Right lobe of liver (tissue), 6 donors: ENCODE measurements at regions of chr4 and their contacts with region 1.

Region 1: GRCh38 chr4:150242820-150243458 is 164.7 kb downstream of the DCLK2 start:
- DNase-seq: no peak
- ATAC-seq: peak; percentile 76 to 83 (median 80)
- H3K4me3 ChIP-seq: no peak overlapping the region
- H3K27ac ChIP-seq: no peak overlapping the region
- H3K4me1 ChIP-seq: no peaks in the 10 kb centered on the region
- H3K27me3 ChIP-seq: no peaks in the 10 kb centered on the region
- CTCF ChIP-seq: peak; percentile 72 to 85 (median 84)
- POLR2A ChIP-seq: no peak

Region 2: DNA sequence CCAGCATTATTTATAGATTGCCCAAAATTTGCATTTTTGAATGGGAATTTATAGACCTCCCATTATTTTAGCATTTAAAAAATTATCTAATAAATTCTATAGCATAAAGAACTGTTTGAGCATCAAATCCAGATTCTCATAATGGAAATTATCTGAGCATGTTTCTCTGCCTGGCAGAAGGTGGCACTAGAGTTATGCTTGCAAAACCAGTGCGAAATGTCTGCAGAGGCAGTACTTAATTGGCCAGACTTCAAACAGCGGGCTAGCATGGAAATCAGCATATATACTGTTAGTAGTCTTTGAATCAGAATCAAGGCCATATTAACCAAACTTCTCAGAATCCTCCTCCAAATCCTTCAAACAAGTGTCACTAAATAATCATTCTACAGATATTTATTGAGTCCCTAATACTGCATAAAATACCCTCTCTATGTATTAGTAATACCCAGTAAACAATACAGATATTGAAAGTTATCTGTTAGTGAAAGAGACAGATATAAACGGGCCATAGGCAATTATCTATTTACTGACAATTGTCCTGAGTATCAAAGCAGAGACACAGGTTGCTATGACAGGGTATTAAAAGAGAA is 243.4 kb before region 1 on chr4:
- intact Hi-C with region 1: loop called in 1 of 2 experiments (anchors 10 kb)
- DNase-seq: no peak
- ATAC-seq: peak; percentile 80 to 87 (median 82)
- H3K4me3 ChIP-seq: no peak overlapping the region
- H3K27ac ChIP-seq: no peak overlapping the region
- H3K4me1 ChIP-seq: peaks cover 0 to 8% (median 0%) of the 10 kb centered on the region in 4 donors
- H3K27me3 ChIP-seq: no peaks in the 10 kb centered on the region
- CTCF ChIP-seq: peak; percentile 59 to 74 (median 68)
- POLR2A ChIP-seq: no peak

Region 3: GRCh38 chr4:150010525-150011126 is 232.3 kb before region 1 on chr4:
- intact Hi-C with region 1: loop called in 1 of 2 experiments (anchors 10 kb)
- DNase-seq: peak in 1 of 3 donors; percentile 47
- ATAC-seq: peak; percentile 86 to 94 (median 92)
- H3K4me3 ChIP-seq: no peak overlapping the region
- H3K27ac ChIP-seq: no peak overlapping the region
- H3K4me1 ChIP-seq: peaks cover 0 to 8% (median 2%) of the 10 kb centered on the region in 4 donors
- H3K27me3 ChIP-seq: no peaks in the 10 kb centered on the region
- CTCF ChIP-seq: peak; percentile 53 to 65 (median 58)
- POLR2A ChIP-seq: no peak